ENCODE measurements at regions of chr3 and their contacts with region 1.

Region 1: DNA sequence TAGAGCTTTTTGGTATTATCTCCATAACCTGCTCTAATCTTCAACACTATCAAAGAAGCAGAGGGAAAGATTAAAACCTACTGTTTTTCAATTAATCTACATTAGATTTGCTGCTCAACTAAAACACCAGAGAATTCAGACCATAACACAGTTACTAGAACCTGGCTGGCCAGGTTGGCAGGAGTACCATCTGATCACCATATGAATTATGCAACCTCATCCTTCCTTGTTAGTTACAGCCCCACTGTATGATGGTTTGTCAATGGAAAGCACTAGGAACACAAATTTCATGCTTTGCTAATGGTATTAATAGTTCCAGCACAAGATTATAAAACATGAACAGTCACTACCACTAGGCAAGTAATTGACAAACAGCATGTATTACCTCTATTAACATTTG is 5.8 kb downstream of the NPHP3 start:
- DNase-seq: no peak
- ATAC-seq: no peak
- H3K4me3 ChIP-seq: no peak overlapping the region
- H3K27ac ChIP-seq: no peak overlapping the region
- H3K4me1 ChIP-seq: peaks cover 8 to 42% (median 27%) of the 10 kb centered on the region in 9 donors
- H3K27me3 ChIP-seq: no peaks in the 10 kb centered on the region
- CTCF ChIP-seq: no peak

Region 2: DNA sequence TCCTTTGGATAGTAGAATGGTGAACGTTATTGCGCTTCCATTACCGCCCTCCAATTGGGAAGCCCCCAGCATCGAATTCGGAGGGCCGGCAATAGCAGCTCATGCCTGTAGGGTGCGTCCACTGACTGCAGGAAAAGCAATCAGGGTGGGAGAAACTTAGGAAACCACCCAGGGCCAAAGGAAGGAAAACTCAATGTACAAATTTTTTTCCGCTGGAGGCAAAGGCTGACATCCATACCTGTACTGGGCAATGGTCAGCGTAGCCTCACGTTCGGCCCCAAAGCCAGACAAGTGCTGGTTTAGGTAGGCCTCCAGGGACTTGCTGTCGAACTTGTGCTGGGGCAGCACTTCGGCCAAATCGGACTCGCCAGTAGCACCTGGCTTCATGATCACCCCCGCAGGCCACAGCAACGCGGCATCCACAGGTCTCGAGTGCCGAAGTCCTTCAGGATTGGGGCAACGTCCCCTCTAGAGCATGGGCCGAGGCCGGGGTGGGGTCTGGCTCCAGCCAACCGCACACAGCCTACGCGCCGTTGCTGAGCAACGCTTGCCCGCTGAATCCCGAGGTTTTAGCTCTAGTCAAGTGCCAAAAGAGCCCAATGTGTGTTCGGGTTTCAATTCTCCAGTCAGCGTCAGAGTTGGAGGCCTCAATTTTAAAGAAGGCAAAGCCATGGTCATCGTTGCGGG is 56.9 kb before region 1 on chr3 and contains the start of gene ACAD11:
- intact Hi-C with region 1: loop called in 4 of 10 experiments (anchors 5 to 10 kb)
- DNase-seq: peak; percentile 66 to 70
- ATAC-seq: peak; percentile 80 to 91 (median 86)
- H3K4me3 ChIP-seq: peak within 1 kb of the TSS; percentile 81 to 94 (median 90)
- H3K27ac ChIP-seq: peak within 1 kb of the TSS; percentile 80 to 97 (median 94)
- H3K4me1 ChIP-seq: peaks cover 2 to 85% (median 64%) of the 10 kb centered on the region in 9 donors
- H3K27me3 ChIP-seq: no peaks in the 10 kb centered on the region
- CTCF ChIP-seq: peak; percentile 31 to 78 (median 59)
- total RNA-seq, gene ACAD11: 11.8 to 31.2 (median 22.2) TPM

Region 3: DNA sequence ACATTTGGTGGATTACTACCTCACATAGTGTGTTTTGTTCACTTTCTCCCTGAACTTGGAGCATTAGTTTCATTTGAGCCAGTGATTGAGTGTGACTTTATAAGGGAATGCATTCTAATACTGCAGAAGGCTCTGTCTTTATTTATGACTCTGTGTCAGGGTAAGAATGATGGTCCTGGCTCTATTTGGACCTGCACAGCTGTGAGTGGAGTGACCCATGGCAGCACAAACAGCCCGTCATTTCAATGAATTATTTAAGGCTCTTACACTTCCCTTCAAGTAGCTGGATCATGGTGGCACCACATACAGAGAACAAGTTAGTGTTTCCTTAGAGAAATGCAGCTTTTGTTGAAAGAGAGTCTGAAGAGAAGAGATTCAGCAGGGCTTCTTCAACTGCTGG is 338.2 kb after region 1 on chr3:
- intact Hi-C with region 1: no loop called
- DNase-seq: no peak
- ATAC-seq: no peak
- H3K4me3 ChIP-seq: no peak overlapping the region
- H3K27ac ChIP-seq: no peak overlapping the region
- H3K4me1 ChIP-seq: no peaks in the 10 kb centered on the region
- H3K27me3 ChIP-seq: no peaks in the 10 kb centered on the region
- CTCF ChIP-seq: no peak

Measured in heart right ventricle (tissue), 16 donors.